ENCODE measurements at regions of chr3 and their contacts with region 1.

Region 1: DNA sequence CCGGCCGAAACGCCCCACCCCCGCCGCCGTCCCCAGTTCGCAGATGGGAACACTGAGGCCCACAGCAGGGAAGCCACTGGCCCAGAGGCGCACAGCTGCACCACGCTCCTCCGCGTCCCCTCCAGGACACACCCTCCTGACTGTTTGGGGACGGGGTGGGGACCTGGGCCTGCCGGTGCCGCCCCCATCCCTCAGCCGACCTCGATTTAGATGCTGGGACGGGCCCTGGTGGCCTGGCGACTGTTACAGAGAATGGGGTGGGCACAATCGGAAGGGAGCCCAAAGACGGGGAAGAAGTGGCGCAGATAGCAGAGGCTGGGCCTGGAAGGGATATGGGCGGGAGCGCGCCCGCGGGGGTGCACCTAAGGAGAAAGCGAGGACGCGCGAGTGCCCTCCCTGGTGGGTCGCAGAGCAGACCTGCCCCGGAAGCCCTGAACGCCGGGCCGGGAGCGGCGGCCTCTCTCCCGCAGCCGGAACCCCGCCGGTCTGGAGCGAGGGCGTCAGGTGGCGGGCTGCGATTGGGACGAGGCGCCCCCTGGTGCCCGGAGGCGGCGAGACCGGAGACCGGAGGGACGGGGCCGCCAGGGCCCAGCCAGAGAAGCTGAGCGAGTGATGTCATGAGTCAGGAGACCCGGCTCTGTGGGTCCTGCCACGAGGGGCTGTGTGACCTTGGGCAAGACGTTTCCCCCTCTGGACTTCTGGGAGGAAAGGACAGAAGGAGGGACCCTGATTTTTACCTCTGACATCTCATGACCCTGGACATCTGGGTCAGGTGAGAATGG is 78.4 kb downstream of the IQSEC1 start:
- DNase-seq: peak; percentile 90
- ATAC-seq: peak; percentile 75
- H3K4me3 ChIP-seq: peak overlapping the region; percentile 30 to 91 (median 72)
- H3K4me3 Mint-ChIP-seq: peak overlapping the region; percentile 95
- H3K27ac ChIP-seq: peak overlapping the region; percentile 74 to 88
- H3K27ac Mint-ChIP-seq: peak overlapping the region; percentile 92
- H3K4me1 ChIP-seq: peaks cover 58 to 83% of the 10 kb centered on the region in 2 donors
- H3K4me1 Mint-ChIP-seq: peaks cover 81% of the 10 kb centered on the region
- H3K27me3 ChIP-seq: no peaks in the 10 kb centered on the region
- H3K27me3 Mint-ChIP-seq: no peaks in the 10 kb centered on the region
- CTCF ChIP-seq: peak; percentile 91

Region 2: GRCh38 chr3:12954891-12955650 is 39.7 kb before region 1 on chr3:
- CTCF ChIA-PET with region 1: interaction called, 11 read pairs
- POLR2A ChIA-PET with region 1: interaction called, 7 read pairs
- intact Hi-C with region 1: loop called (anchors 2 kb)
- DNase-seq: peak; percentile 87
- ATAC-seq: peak; percentile 96
- H3K4me3 ChIP-seq: peak overlapping the region in 3 of 5 experiments; percentile 20 to 40 (median 32)
- H3K4me3 Mint-ChIP-seq: peak overlapping the region; percentile 74
- H3K27ac ChIP-seq: peak overlapping the region; percentile 70 to 81
- H3K27ac Mint-ChIP-seq: peak overlapping the region; percentile 94
- H3K4me1 ChIP-seq: peaks cover 60 to 90% of the 10 kb centered on the region in 2 donors
- H3K4me1 Mint-ChIP-seq: peaks cover 80% of the 10 kb centered on the region
- H3K27me3 ChIP-seq: no peaks in the 10 kb centered on the region
- H3K27me3 Mint-ChIP-seq: no peaks in the 10 kb centered on the region
- CTCF ChIP-seq: peak; percentile 35

Region 3: DNA sequence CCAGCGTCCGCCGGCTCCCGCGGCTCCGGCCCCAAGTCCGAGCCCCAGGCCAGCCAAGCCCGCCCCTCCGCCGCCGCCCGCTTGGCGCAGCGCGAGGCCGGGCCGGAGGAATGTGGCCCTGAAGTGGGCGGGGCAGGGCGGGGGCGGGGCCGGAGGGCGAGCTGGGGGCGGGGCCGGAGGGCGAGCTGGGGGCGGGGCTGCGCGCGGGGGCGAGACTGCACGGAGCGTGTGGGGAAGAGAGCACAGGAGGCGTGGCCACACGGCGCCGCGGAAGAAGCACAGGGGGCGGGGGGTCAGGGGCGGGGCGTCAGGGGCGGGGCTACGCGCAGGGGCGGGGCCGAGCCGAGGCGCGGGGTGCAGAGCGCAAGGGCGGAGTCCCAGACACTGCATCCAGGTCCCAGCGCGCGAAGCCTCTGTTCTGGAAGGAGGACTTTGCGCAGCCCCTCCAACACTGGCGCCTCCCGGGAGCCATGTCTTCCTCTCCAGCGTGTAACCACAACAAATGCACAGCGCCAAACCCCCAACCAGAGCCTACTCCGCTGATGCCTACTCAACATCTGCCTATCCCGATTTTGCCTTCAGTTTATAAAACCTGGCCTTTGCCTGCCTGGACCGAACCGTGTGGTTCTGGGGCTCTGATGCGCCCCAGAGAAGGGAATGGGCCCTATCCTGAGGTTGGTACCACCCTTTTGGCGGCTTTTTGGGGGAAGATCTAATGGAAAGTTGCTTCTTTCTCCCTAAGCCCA is 27.0 kb before region 1 on chr3:
- CTCF ChIA-PET with region 1: interaction called, 13 read pairs
- POLR2A ChIA-PET with region 1: interaction called, 3 read pairs
- intact Hi-C with region 1: no loop called
- DNase-seq: peak; percentile 91
- ATAC-seq: peak; percentile 98
- H3K4me3 ChIP-seq: peak overlapping the region in 4 of 5 experiments; percentile 16 to 61 (median 44)
- H3K4me3 Mint-ChIP-seq: peak overlapping the region; percentile 86
- H3K27ac ChIP-seq: peak overlapping the region in 1 of 2 donors; percentile 11
- H3K27ac Mint-ChIP-seq: peak overlapping the region; percentile 85
- H3K4me1 ChIP-seq: peaks cover 55 to 78% of the 10 kb centered on the region in 2 donors
- H3K4me1 Mint-ChIP-seq: peaks cover 77% of the 10 kb centered on the region
- H3K27me3 ChIP-seq: no peaks in the 10 kb centered on the region
- H3K27me3 Mint-ChIP-seq: no peaks in the 10 kb centered on the region
- CTCF ChIP-seq: no peak

Region 4: GRCh38 chr3:13012228-13012691 is 17.5 kb after region 1 on chr3:
- CTCF ChIA-PET with region 1: interaction called, 108 read pairs
- POLR2A ChIA-PET with region 1: interaction called, 22 read pairs
- intact Hi-C with region 1: loop called (anchors 1 kb)
- DNase-seq: peak; percentile 88
- ATAC-seq: peak; percentile 31
- H3K4me3 ChIP-seq: peak overlapping the region in 2 of 5 experiments; percentile 3 to 6
- H3K4me3 Mint-ChIP-seq: peak overlapping the region; percentile 86
- H3K27ac ChIP-seq: peak overlapping the region; percentile 96 to 97
- H3K27ac Mint-ChIP-seq: peak overlapping the region; percentile 95
- H3K4me1 ChIP-seq: peaks cover 98 to 100% of the 10 kb centered on the region in 2 donors
- H3K4me1 Mint-ChIP-seq: peaks cover 95% of the 10 kb centered on the region
- H3K27me3 ChIP-seq: no peaks in the 10 kb centered on the region
- H3K27me3 Mint-ChIP-seq: no peaks in the 10 kb centered on the region
- CTCF ChIP-seq: no peak

Region 5: GRCh38 chr3:13022348-13023234 is 27.8 kb after region 1 on chr3:
- CTCF ChIA-PET with region 1: interaction called, 42 read pairs
- POLR2A ChIA-PET with region 1: interaction called, 10 read pairs
- intact Hi-C with region 1: loop called (anchors 1 kb)
- DNase-seq: peak; percentile 72
- ATAC-seq: peak; percentile 62
- H3K4me3 ChIP-seq: peak overlapping the region; percentile 81 to 98 (median 88)
- H3K4me3 Mint-ChIP-seq: peak overlapping the region; percentile 100
- H3K27ac ChIP-seq: peak overlapping the region; percentile 96 to 97
- H3K27ac Mint-ChIP-seq: peak overlapping the region; percentile 95
- H3K4me1 ChIP-seq: peaks cover 45 to 55% of the 10 kb centered on the region in 2 donors
- H3K4me1 Mint-ChIP-seq: peaks cover 78% of the 10 kb centered on the region
- H3K27me3 ChIP-seq: no peaks in the 10 kb centered on the region
- H3K27me3 Mint-ChIP-seq: no peaks in the 10 kb centered on the region
- CTCF ChIP-seq: no peak

Region 6: GRCh38 chr3:13045904-13046568 is 51.2 kb after region 1 on chr3:
- CTCF ChIA-PET with region 1: interaction called, 31 read pairs
- POLR2A ChIA-PET with region 1: interaction called, 9 read pairs
- intact Hi-C with region 1: no loop called
- DNase-seq: peak; percentile 90
- ATAC-seq: peak; percentile 92
- H3K4me3 ChIP-seq: peak overlapping the region in 2 of 5 experiments; percentile 26 to 42
- H3K4me3 Mint-ChIP-seq: peak overlapping the region; percentile 90
- H3K27ac ChIP-seq: peak overlapping the region; percentile 89
- H3K27ac Mint-ChIP-seq: peak overlapping the region; percentile 87
- H3K4me1 ChIP-seq: peaks cover 63 to 71% of the 10 kb centered on the region in 2 donors
- H3K4me1 Mint-ChIP-seq: peaks cover 70% of the 10 kb centered on the region
- H3K27me3 ChIP-seq: no peaks in the 10 kb centered on the region
- H3K27me3 Mint-ChIP-seq: no peaks in the 10 kb centered on the region
- CTCF ChIP-seq: no peak

Region 7: GRCh38 chr3:13332158-13332557 is 337.4 kb after region 1 on chr3:
- CTCF ChIA-PET with region 1: no interaction called
- POLR2A ChIA-PET with region 1: no interaction called
- intact Hi-C with region 1: loop called (anchors 5 kb)
- DNase-seq: peak; percentile 87
- ATAC-seq: peak; percentile 89
- H3K4me3 ChIP-seq: no peak overlapping the region
- H3K4me3 Mint-ChIP-seq: peak overlapping the region; percentile 62
- H3K27ac ChIP-seq: peak overlapping the region; percentile 46 to 64
- H3K27ac Mint-ChIP-seq: peak overlapping the region; percentile 87
- H3K4me1 ChIP-seq: peaks cover 27 to 41% of the 10 kb centered on the region in 2 donors
- H3K4me1 Mint-ChIP-seq: peaks cover 40% of the 10 kb centered on the region
- H3K27me3 ChIP-seq: no peaks in the 10 kb centered on the region
- H3K27me3 Mint-ChIP-seq: no peaks in the 10 kb centered on the region
- CTCF ChIP-seq: no peak

Region 8: DNA sequence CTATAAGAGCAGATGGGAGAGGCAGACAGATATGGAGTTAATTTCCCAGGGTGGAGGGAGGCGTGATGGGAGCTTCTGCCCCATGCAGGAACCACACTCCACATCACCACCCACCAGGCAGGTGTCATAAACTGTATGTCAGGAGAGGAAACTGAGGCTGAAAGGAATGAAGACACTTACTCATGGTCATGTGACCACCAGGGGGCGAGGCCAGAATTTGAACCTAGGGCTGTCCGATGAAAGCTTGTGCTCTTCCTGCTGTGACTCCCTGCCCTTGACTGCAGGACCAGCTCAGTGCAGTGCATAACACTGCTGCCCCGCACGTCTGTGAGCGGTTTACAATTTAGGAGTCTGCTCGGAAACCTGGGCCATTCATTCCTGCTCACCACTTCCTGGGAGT is 396.5 kb after region 1 on chr3:
- CTCF ChIA-PET with region 1: no interaction called
- POLR2A ChIA-PET with region 1: no interaction called
- intact Hi-C with region 1: no loop called
- DNase-seq: peak; percentile 42
- ATAC-seq: no peak
- H3K4me3 ChIP-seq: no peak overlapping the region
- H3K4me3 Mint-ChIP-seq: no peak overlapping the region
- H3K27ac ChIP-seq: no peak overlapping the region
- H3K27ac Mint-ChIP-seq: no peak overlapping the region
- H3K4me1 ChIP-seq: no peaks in the 10 kb centered on the region
- H3K4me1 Mint-ChIP-seq: peaks cover under 1% of the 10 kb centered on the region
- H3K27me3 ChIP-seq: no peaks in the 10 kb centered on the region
- H3K27me3 Mint-ChIP-seq: no peaks in the 10 kb centered on the region
- CTCF ChIP-seq: peak; percentile 43

Region 9: DNA sequence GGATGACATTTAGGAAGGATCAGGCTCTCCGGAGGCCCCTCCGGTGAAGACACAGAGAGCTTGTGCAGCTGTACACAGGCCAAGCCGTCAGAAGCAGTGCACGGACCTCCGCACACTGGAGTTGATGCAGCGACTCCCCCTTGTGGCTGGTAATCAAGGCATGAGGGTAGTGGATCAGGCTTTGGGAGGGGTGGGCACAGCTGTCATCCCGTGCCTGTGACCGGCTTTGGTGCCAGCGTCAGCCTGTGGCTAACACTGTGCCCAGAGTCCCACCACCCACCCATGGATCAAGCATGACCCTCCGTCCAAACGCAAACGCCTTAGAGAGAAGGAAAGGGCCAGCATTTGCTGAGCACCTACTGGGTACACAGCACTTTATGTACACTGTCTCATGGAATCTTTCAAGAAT is 1553.5 kb after region 1 on chr3:
- CTCF ChIA-PET with region 1: no interaction called
- POLR2A ChIA-PET with region 1: no interaction called
- intact Hi-C with region 1: no loop called
- DNase-seq: peak; percentile 41
- ATAC-seq: no peak
- H3K4me3 ChIP-seq: no peak overlapping the region
- H3K4me3 Mint-ChIP-seq: no peak overlapping the region
- H3K27ac ChIP-seq: no peak overlapping the region
- H3K27ac Mint-ChIP-seq: no peak overlapping the region
- H3K4me1 ChIP-seq: no peaks in the 10 kb centered on the region
- H3K4me1 Mint-ChIP-seq: peaks cover 2% of the 10 kb centered on the region
- H3K27me3 ChIP-seq: peaks cover 0 to 3% (median under 1%) of the 10 kb centered on the region in 4 experiments
- H3K27me3 Mint-ChIP-seq: peaks cover 40% of the 10 kb centered on the region
- CTCF ChIP-seq: peak; percentile 36

Measured in B cell (primary cell).